GM10248 (cell line): ENCODE measurements at regions of chrX and their contacts with region 1.

Region 1: DNA sequence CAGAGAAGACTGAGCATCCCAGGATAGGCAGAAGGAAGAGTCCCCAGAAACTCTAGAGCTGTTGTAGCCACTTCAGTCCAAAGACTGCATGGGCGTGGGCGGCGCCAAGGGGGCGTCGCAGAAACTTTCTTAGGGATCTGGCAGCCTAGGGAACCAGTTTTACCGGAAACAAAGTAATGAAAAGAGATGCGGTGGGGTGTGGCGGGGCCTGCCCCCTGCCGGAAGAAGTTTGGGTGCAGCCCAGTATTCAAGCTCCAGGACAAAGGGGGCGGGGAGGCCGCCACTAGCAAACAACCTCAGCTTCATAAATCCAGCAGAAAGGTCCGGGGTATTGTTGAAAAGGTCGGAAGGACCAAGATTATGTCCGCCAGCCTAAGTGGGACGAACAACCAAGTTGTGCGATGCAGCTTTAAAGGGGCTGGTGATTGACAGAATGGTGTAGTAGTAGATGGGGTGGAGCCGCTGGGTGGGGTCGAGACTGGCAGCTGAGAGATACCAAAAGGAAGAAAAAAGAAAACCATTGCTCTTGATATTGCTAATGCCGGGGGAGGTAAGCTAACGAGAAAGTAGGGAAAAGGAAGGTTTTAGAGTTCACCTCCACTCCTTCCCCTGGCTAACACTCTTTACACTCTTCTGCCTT is 190.5 kb downstream of the RRAGB start:
- DNase-seq: peak; percentile 55
- CTCF ChIP-seq: peak; percentile 30

Region 2: GRCh38 chrX:55783723-55784122 is 124.4 kb before region 1 on chrX:
- CTCF ChIA-PET with region 1: no interaction called
- POLR2A ChIA-PET with region 1: no interaction called
- DNase-seq: no peak
- CTCF ChIP-seq: no peak

Region 3: GRCh38 chrX:55841962-55842752 is 65.9 kb before region 1 on chrX:
- CTCF ChIA-PET with region 1: interaction called, 10 read pairs
- POLR2A ChIA-PET with region 1: no interaction called
- DNase-seq: no peak
- CTCF ChIP-seq: no peak

Region 4: GRCh38 chrX:55919367-55920221 is 11.5 kb after region 1 on chrX:
- CTCF ChIA-PET with region 1: interaction called, 28 read pairs
- POLR2A ChIA-PET with region 1: interaction called, 3 read pairs
- DNase-seq: peak; percentile 37
- CTCF ChIP-seq: peak; percentile 9